ENCODE measurements at regions of chr1 and their contacts with region 1.

Region 1: DNA sequence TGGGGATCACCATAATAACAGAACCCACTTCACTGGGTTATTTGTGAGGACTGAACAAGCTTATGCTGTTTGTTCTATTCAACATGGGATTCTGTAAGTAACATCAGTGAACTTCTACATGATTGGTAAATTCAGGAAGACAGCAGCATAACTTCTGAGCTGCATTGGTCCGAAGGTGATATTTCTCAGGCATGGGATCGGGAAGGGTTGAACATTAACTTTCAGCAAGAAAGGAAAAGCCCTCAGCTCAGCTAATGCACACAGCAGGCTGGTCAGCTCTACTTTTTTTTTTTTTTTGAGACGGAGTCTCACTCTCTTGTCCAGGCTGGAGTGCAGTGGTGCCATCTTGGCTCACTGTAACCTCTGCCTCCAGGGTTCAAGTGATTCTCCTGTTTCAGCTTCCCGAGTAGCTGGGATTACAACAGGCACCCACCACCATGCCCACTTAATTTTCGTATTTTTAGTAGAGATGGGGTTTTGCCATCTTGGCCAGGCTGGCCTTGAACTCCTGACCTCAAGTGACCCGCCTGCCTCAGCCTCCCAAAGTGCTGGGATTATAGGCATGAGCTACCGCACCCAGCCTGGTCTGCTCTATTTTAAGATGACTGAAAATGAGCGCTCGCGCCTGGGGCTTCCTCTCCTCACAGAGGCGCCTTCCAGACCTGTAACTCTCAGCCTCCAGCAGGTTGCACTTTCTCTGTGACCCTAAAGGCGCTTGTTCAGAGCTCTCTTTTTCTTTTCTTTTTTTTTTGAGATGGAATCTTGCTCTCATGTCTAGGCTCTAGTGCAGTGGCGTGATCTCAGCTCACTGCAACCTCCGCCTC is 42.2 kb downstream of the ECE1 start:
- DNase-seq: peak in 1 of 2 experiments; percentile 43
- H3K4me3 ChIP-seq: no peak overlapping the region
- H3K4me3 Mint-ChIP-seq: no peak overlapping the region
- H3K27ac Mint-ChIP-seq: no peak overlapping the region
- H3K4me1 ChIP-seq: peaks cover 36% of the 10 kb centered on the region
- H3K4me1 Mint-ChIP-seq: peaks cover 13% of the 10 kb centered on the region
- H3K27me3 ChIP-seq: no peaks in the 10 kb centered on the region
- H3K27me3 Mint-ChIP-seq: no peaks in the 10 kb centered on the region
- CTCF ChIP-seq: no peak

Region 2: GRCh38 chr1:21206117-21206516 is 42.0 kb before region 1 on chr1:
- CTCF ChIA-PET with region 1: no interaction called
- POLR2A ChIA-PET with region 1: no interaction called
- intact Hi-C with region 1: no loop called
- DNase-seq: no peak
- H3K4me3 ChIP-seq: no peak overlapping the region
- H3K4me3 Mint-ChIP-seq: no peak overlapping the region
- H3K27ac Mint-ChIP-seq: no peak overlapping the region
- H3K4me1 ChIP-seq: no peaks in the 10 kb centered on the region
- H3K4me1 Mint-ChIP-seq: no peaks in the 10 kb centered on the region
- H3K27me3 ChIP-seq: no peaks in the 10 kb centered on the region
- H3K27me3 Mint-ChIP-seq: no peaks in the 10 kb centered on the region
- CTCF ChIP-seq: no peak

Region 3: DNA sequence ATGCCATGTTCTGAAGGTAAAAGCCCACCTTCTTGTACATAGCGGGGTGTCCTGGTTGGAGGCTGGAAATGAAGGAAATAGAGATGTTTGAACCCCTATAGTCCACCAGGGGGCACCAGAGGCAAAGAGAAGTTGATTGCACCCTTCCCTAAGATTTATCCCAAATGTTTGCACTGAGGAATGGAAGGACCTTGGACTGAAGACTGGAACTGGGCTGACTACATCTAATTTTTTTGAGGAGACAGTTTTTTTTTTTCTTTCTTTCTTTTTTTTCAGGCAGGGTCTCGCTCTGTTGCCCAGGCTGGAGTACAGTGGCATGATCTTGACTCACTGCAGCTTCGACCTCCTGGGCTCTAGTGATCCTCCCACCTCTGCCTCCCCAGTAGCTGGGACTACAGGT is 16.1 kb before region 1 on chr1:
- CTCF ChIA-PET with region 1: interaction called, 16 read pairs
- POLR2A ChIA-PET with region 1: interaction called, 3 read pairs
- intact Hi-C with region 1: loop called (anchors 1 kb)
- DNase-seq: peak; percentile 46 to 68
- H3K4me3 ChIP-seq: no peak overlapping the region
- H3K4me3 Mint-ChIP-seq: no peak overlapping the region
- H3K27ac Mint-ChIP-seq: no peak overlapping the region
- H3K4me1 ChIP-seq: peaks cover 5% of the 10 kb centered on the region
- H3K4me1 Mint-ChIP-seq: no peaks in the 10 kb centered on the region
- H3K27me3 ChIP-seq: no peaks in the 10 kb centered on the region
- H3K27me3 Mint-ChIP-seq: no peaks in the 10 kb centered on the region
- CTCF ChIP-seq: peak; percentile 73 to 84

Measured in Caco-2 (cell line).